Activated naive CD4-positive, alpha-beta T cell treated with anti-CD3 and anti-CD28 coated beads for 36 hours (primary cell): ENCODE measurements at regions of chr1 and their contacts with region 1.

Region 1: GRCh38 chr1:224458996-224459395 is 24.4 kb upstream of the WDR26 start:
- DNase-seq: no peak
- H3K4me3 Mint-ChIP-seq: no peak overlapping the region
- H3K27ac Mint-ChIP-seq: peak overlapping the region; percentile 41
- H3K4me1 Mint-ChIP-seq: peaks cover 13% of the 10 kb centered on the region
- H3K27me3 Mint-ChIP-seq: no peaks in the 10 kb centered on the region

Region 2: DNA sequence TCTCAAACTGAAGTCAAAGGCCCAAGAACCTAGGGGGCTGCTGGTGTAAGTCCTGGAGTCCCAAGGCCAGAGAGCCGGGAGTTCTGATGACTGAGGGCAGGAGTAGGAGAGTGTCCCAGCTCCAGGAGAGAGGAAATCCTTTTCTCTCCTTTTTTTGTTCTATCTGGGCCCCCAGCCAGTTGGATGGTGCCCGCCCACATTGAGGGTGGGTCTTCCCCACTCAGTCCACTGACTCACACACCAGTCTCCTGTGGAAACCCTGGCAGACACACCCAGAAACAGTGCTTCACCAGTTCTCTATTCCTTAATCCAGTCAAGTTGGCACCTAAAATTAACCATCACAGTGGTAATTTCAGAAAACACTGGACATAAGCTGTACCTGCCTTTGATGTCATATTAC is 11.7 kb before region 1 on chr1:
- CTCF ChIA-PET with region 1: interaction called, 19 read pairs
- intact Hi-C with region 1: no loop called
- DNase-seq: no peak
- H3K4me3 Mint-ChIP-seq: no peak overlapping the region
- H3K27ac Mint-ChIP-seq: no peak overlapping the region
- H3K4me1 Mint-ChIP-seq: peaks cover 12% of the 10 kb centered on the region
- H3K27me3 Mint-ChIP-seq: no peaks in the 10 kb centered on the region